ENCODE measurements at regions of chr2 and their contacts with region 1.

Region 1: GRCh38 chr2:241877989-241878970 is 8.8 kb downstream of the RTP5 start:
- DNase-seq: peak; percentile 53 to 85 (median 73)
- ATAC-seq: no peak
- H3K4me3 ChIP-seq: no peak overlapping the region
- H3K4me3 Mint-ChIP-seq: no peak overlapping the region
- H3K27ac ChIP-seq: no peak overlapping the region
- H3K27ac Mint-ChIP-seq: peak overlapping the region in 1 of 9 donors; percentile 62
- H3K4me1 ChIP-seq: peaks cover 15 to 17% of the 10 kb centered on the region in 2 donors
- H3K4me1 Mint-ChIP-seq: peaks cover 17 to 32% (median 21%) of the 10 kb centered on the region in 7 donors
- H3K27me3 ChIP-seq: no peaks in the 10 kb centered on the region
- H3K27me3 Mint-ChIP-seq: peaks cover 0 to 5% (median 0%) of the 10 kb centered on the region in 5 donors

Region 2: DNA sequence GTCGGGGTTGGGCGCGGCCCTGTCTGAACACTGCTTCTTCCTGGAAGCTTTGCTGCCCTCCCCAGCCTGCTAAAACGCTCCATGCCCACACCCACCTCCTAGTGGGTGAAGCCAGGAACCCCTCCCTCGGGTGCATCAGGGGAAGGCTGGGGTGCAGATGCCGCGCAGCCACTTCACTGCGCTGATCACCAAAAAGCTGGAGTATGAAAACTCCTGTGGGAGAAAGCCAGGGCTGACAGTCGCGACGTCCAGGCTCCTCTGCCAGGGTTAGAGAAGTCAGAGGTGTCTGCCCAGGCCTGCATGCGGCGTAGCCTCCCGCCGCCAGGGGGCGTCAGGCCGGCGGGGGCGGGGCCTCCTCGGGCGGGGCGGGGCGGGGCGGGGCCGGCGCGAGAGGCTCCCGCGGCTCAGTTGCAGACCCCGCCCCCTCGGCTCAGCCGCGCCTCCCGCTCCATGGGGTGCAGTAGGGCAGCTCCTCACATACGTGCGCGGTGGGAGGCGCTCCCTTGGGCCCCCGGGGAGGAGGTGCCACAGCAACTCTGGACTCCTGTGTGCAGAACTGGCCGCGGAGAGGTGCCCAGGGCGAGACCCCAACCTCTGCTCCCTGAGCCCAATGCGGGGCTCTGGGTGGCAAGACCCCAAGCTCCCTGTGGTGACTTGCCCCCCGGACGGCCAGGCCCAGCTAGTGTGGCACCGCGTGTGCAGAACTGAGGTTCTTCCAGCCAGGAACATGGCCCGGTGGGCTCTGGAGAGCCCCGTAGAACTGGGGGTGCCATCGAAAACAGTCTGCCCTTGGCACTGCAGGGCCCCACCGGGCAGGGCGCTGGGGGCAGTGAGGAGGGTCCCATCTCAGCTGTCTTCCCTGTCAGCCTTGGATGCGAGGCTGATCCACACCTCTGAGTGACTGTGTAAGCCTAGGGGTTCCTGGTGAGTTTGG is 1311.8 kb before region 1 on chr2:
- CTCF ChIA-PET with region 1: no interaction called
- POLR2A ChIA-PET with region 1: no interaction called
- intact Hi-C with region 1: loop called (anchors 5 to 10 kb)
- DNase-seq: peak; percentile 86 to 96 (median 92)
- ATAC-seq: peak; percentile 79
- H3K4me3 ChIP-seq: peak overlapping the region; percentile 82
- H3K4me3 Mint-ChIP-seq: peak overlapping the region; percentile 88 to 98 (median 94)
- H3K27ac ChIP-seq: peak overlapping the region; percentile 85
- H3K27ac Mint-ChIP-seq: peak overlapping the region; percentile 90 to 99 (median 98)
- H3K4me1 ChIP-seq: peaks cover 80% of the 10 kb centered on the region in 2 donors
- H3K4me1 Mint-ChIP-seq: peaks cover 53 to 82% (median 75%) of the 10 kb centered on the region in 7 donors
- H3K27me3 ChIP-seq: no peaks in the 10 kb centered on the region
- H3K27me3 Mint-ChIP-seq: no peaks in the 10 kb centered on the region

Region 3: GRCh38 chr2:241149925-241150659 is 728.2 kb before region 1 on chr2 and contains the start of gene PPP1R7:
- CTCF ChIA-PET with region 1: no interaction called
- POLR2A ChIA-PET with region 1: no interaction called
- intact Hi-C with region 1: loop called in 1 of 2 experiments (anchors 1 kb)
- DNase-seq: peak; percentile 83 to 96 (median 93)
- ATAC-seq: peak; percentile 87
- H3K4me3 ChIP-seq: peak within 1 kb of the TSS; percentile 97
- H3K4me3 Mint-ChIP-seq: peak within 1 kb of the TSS; percentile 95 to 100 (median 98)
- H3K27ac ChIP-seq: peak within 1 kb of the TSS; percentile 71
- H3K27ac Mint-ChIP-seq: peak within 1 kb of the TSS; percentile 85 to 97 (median 94)
- H3K4me1 ChIP-seq: peaks cover 13 to 26% of the 10 kb centered on the region in 2 donors
- H3K4me1 Mint-ChIP-seq: peaks cover 33 to 58% (median 51%) of the 10 kb centered on the region in 7 donors
- H3K27me3 ChIP-seq: no peaks in the 10 kb centered on the region
- H3K27me3 Mint-ChIP-seq: no peaks in the 10 kb centered on the region
- total RNA-seq, gene PPP1R7: 39.2 to 105 (median 55.3) TPM

Region 4: DNA sequence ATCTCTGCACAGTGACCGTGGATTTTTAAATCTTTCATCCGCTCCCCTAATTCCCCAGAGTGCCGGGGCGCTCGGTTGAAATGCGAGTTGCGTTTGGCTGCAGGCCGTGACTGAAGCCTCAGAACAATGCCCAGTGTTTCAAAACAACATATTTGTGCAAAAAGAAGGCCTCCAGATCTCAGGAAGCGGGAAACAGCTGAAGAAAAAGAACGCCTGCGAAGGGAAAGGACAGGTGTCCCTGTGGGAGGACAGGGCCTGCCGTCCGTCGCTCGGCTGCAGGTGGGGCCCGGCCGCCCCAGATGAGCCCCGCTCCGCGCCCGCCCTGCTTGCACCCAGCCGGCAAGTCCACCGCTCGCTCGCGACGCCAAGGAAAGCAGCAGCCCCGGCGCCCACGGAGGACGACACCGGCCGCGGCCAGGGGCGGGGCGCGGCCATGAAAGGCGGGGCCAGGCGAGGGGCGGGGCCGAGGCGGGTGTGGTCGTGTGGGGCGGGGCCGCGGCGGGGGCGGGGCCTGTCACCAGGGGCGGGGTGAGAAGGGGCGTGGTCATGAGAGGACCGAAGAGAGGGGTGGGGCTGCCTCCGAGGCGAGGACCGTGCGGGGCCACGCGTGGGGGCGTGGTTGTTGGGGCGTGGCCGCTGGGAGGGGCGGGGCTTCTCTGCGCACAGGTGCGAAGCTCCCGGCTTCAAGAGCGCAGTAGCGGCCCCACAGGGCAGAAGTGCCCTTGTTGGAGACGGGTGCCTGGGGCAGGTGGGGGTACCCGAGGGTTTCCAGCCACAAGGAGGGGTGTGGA is 337.3 kb before region 1 on chr2:
- CTCF ChIA-PET with region 1: no interaction called
- POLR2A ChIA-PET with region 1: no interaction called
- intact Hi-C with region 1: loop called in 1 of 2 experiments (anchors 1 kb)
- DNase-seq: peak; percentile 37 to 82 (median 49)
- ATAC-seq: peak; percentile 92
- H3K4me3 ChIP-seq: no peak overlapping the region
- H3K4me3 Mint-ChIP-seq: peak overlapping the region; percentile 53 to 84 (median 62)
- H3K27ac ChIP-seq: no peak overlapping the region
- H3K27ac Mint-ChIP-seq: no peak overlapping the region
- H3K4me1 ChIP-seq: no peaks in the 10 kb centered on the region
- H3K4me1 Mint-ChIP-seq: peaks cover 0 to 8% (median 4%) of the 10 kb centered on the region in 7 donors
- H3K27me3 ChIP-seq: peaks cover 0 to 3% of the 10 kb centered on the region in 2 donors
- H3K27me3 Mint-ChIP-seq: peaks cover 11 to 29% (median 19%) of the 10 kb centered on the region in 5 donors

Region 5: GRCh38 chr2:241686649-241687425 is 191.4 kb before region 1 on chr2 and contains the start of gene DTYMK:
- CTCF ChIA-PET with region 1: interaction called, 4 read pairs
- POLR2A ChIA-PET with region 1: interaction called, 5 read pairs
- intact Hi-C with region 1: loop called (anchors 1 kb)
- DNase-seq: peak; percentile 92 to 98 (median 97)
- ATAC-seq: peak; percentile 97
- H3K4me3 ChIP-seq: peak within 1 kb of the TSS; percentile 91
- H3K4me3 Mint-ChIP-seq: peak within 1 kb of the TSS; percentile 84 to 98 (median 95)
- H3K27ac ChIP-seq: peak within 1 kb of the TSS; percentile 81
- H3K27ac Mint-ChIP-seq: peak within 1 kb of the TSS; percentile 74 to 96 (median 88)
- H3K4me1 ChIP-seq: peaks cover 8 to 18% of the 10 kb centered on the region in 2 donors
- H3K4me1 Mint-ChIP-seq: peaks cover 4 to 40% (median 31%) of the 10 kb centered on the region in 7 donors
- H3K27me3 ChIP-seq: no peaks in the 10 kb centered on the region
- H3K27me3 Mint-ChIP-seq: no peaks in the 10 kb centered on the region
- total RNA-seq, gene DTYMK: 12.0 to 65.7 (median 17.0) TPM

Region 6: GRCh38 chr2:241813471-241814252 is 64.6 kb before region 1 on chr2:
- CTCF ChIA-PET with region 1: no interaction called
- POLR2A ChIA-PET with region 1: no interaction called
- intact Hi-C with region 1: no loop called
- DNase-seq: peak in 3 of 9 donors; percentile 20 to 42 (median 35)
- ATAC-seq: peak; percentile 90
- H3K4me3 ChIP-seq: no peak overlapping the region
- H3K4me3 Mint-ChIP-seq: no peak overlapping the region
- H3K27ac ChIP-seq: no peak overlapping the region
- H3K27ac Mint-ChIP-seq: no peak overlapping the region
- H3K4me1 ChIP-seq: peaks cover 0 to 12% of the 10 kb centered on the region in 2 donors
- H3K4me1 Mint-ChIP-seq: peaks cover 0 to 6% (median 4%) of the 10 kb centered on the region in 7 donors
- H3K27me3 ChIP-seq: no peaks in the 10 kb centered on the region
- H3K27me3 Mint-ChIP-seq: peaks cover 0 to 5% (median 0%) of the 10 kb centered on the region in 5 donors

Region 7: GRCh38 chr2:241859436-241860183 is 18.7 kb before region 1 on chr2:
- CTCF ChIA-PET with region 1: no interaction called
- POLR2A ChIA-PET with region 1: interaction called, 6 read pairs
- intact Hi-C with region 1: loop called in 1 of 2 experiments (anchors 1 kb)
- DNase-seq: peak in 4 of 9 donors; percentile 18 to 67 (median 30)
- ATAC-seq: peak; percentile 30
- H3K4me3 ChIP-seq: peak overlapping the region; percentile 61
- H3K4me3 Mint-ChIP-seq: peak overlapping the region; percentile 84 to 91 (median 86)
- H3K27ac ChIP-seq: peak overlapping the region; percentile 11
- H3K27ac Mint-ChIP-seq: peak overlapping the region; percentile 9 to 96 (median 70)
- H3K4me1 ChIP-seq: peaks cover 23 to 62% of the 10 kb centered on the region in 2 donors
- H3K4me1 Mint-ChIP-seq: peaks cover 18 to 50% (median 36%) of the 10 kb centered on the region in 7 donors
- H3K27me3 ChIP-seq: peaks cover 0 to 3% of the 10 kb centered on the region in 2 donors
- H3K27me3 Mint-ChIP-seq: peaks cover 5 to 32% (median 19%) of the 10 kb centered on the region in 5 donors

Region 8: GRCh38 chr2:241910604-241911520 is 32.6 kb after region 1 on chr2:
- CTCF ChIA-PET with region 1: no interaction called
- POLR2A ChIA-PET with region 1: no interaction called
- intact Hi-C with region 1: no loop called
- DNase-seq: no peak
- ATAC-seq: no peak
- H3K4me3 ChIP-seq: no peak overlapping the region
- H3K4me3 Mint-ChIP-seq: no peak overlapping the region
- H3K27ac ChIP-seq: no peak overlapping the region
- H3K27ac Mint-ChIP-seq: no peak overlapping the region
- H3K4me1 ChIP-seq: no peaks in the 10 kb centered on the region
- H3K4me1 Mint-ChIP-seq: peaks cover 0 to 2% (median 0%) of the 10 kb centered on the region in 7 donors
- H3K27me3 ChIP-seq: no peaks in the 10 kb centered on the region
- H3K27me3 Mint-ChIP-seq: no peaks in the 10 kb centered on the region